ENCODE measurements at regions of chr4 and their contacts with region 1.

Region 1: GRCh38 chr4:83074086-83074704 is 39.2 kb downstream of the COPS4 start:
- DNase-seq: no peak
- ATAC-seq: peak; percentile 87
- H3K4me3 Mint-ChIP-seq: no peak overlapping the region
- H3K27ac Mint-ChIP-seq: no peak overlapping the region
- H3K4me1 Mint-ChIP-seq: no peaks in the 10 kb centered on the region
- H3K27me3 Mint-ChIP-seq: no peaks in the 10 kb centered on the region
- CTCF ChIP-seq: peak; percentile 64

Region 2: DNA sequence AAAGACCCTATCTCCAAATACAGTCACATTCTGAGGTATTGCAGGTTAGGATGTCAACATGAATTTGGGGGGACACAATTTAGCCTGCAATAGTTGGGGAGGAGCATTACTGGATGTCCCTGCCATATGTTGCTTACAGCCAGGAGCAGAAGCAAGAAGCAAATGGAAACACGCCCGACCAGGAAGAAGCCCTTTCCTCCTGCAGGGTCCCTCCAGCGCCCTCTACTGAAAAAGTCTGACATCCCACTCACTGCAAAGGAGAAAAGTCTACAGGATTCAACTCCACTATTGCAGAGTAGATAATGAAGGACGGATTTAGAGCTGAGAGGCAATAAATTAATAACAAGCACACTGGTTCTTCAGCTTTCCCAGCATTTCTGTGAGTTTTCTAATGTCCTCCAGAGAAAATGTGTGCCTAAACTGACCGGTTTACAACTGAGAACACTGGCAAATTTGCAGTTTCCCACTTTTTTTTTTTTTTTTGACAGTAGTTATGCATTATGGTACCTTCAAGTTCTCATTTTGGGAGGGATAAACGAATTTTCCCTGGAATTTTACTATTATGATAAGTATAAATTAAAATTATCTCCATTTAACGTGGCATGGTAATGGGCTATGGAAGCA is 178.7 kb after region 1 on chr4:
- CTCF ChIA-PET with region 1: interaction called, 12 read pairs
- POLR2A ChIA-PET with region 1: no interaction called
- DNase-seq: peak; percentile 73
- ATAC-seq: peak; percentile 89
- H3K4me3 Mint-ChIP-seq: no peak overlapping the region
- H3K27ac Mint-ChIP-seq: no peak overlapping the region
- H3K4me1 Mint-ChIP-seq: peaks cover 7% of the 10 kb centered on the region; the same call in 1 of the 2 replicates
- H3K27me3 Mint-ChIP-seq: no peaks in the 10 kb centered on the region
- CTCF ChIP-seq: peak; percentile 66; the same call in 1 of the 2 replicates